ENCODE measurements at regions of chr2 and their contacts with region 1.

Region 1: GRCh38 chr2:26244309-26245121 is at the starts of genes HADHA and HADHB:
- DNase-seq: peak; percentile 88
- ATAC-seq: peak; percentile 84
- H3K4me3 Mint-ChIP-seq: peak within 1 kb of the TSS; percentile 97
- H3K27ac Mint-ChIP-seq: peak within 1 kb of the TSS; percentile 100
- H3K4me1 Mint-ChIP-seq: peaks cover 72% of the 10 kb centered on the region
- H3K27me3 Mint-ChIP-seq: no peaks in the 10 kb centered on the region
- CTCF ChIP-seq: no peak
- total RNA-seq, gene HADHA: 127 and 128 TPM in 2 replicates
- total RNA-seq, gene HADHB: 62.4 and 65.6 TPM in 2 replicates

Region 2: DNA sequence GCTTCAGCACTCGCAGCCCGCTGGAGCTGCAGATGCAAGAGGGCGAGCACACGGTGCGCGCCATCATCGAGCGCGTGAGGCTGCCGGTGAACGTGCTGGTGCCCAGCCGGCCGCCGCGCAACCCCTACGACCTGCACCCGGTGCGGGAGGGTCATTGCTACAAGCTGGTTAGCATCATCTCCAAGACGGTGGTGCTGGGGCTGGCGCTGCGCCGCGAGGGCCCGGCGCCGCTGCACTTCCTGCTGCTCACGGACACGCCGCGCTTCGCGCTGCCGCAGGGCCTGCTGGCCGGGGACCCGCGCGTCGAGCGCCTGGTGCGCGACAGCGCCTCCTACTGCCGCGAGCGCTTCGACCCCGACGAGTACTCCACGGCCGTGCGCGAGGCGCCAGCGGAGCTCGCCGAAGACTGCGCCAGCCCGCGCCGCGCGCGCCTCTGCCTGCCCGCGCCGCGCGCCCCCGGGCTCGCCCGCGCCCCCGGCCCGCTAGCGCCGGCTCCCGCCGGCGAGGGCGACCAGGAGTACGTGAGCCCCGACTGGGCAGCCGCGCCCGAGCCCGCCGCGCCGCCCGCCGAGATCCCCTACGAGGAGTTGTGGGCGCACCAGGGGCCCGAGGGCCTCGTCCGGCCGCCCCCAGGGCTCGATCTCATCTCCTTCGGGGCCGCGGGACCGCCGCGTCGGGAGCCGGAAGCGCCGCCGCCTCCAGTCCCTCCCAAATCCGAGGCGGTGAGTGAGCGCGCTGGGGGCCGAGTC is 59.8 kb before region 1 on chr2:
- CTCF ChIA-PET with region 1: interaction called, 4 read pairs
- POLR2A ChIA-PET with region 1: interaction called, 6 read pairs
- intact Hi-C with region 1: loop called (anchors 2 kb)
- DNase-seq: peak; percentile 80
- ATAC-seq: peak; percentile 98
- H3K4me3 Mint-ChIP-seq: peak overlapping the region; percentile 75
- H3K27ac Mint-ChIP-seq: no peak overlapping the region
- H3K4me1 Mint-ChIP-seq: peaks cover 10% of the 10 kb centered on the region
- H3K27me3 Mint-ChIP-seq: peaks cover 13% of the 10 kb centered on the region
- CTCF ChIP-seq: no peak

Region 3: DNA sequence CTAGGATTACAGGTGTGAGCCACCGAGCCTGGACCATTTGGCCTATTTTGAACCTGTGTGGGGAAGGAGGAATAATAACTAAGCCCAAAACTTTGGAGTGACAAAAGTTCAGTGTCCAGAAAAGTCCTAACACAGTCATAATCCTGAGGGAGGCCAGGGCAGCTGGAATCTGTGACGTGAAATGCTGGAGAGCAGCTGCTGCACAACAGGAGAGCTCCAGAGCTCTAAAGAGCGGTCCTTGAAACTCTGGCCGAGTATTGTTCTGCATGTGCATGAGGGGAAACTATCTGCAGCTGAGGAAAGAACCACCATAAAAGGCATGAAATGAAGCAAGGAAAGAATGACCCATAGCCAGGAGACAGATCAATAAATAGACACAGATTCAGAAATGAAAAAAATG is 27.9 kb before region 1 on chr2:
- CTCF ChIA-PET with region 1: no interaction called
- POLR2A ChIA-PET with region 1: no interaction called
- intact Hi-C with region 1: no loop called
- DNase-seq: no peak
- ATAC-seq: no peak
- H3K4me3 Mint-ChIP-seq: no peak overlapping the region
- H3K27ac Mint-ChIP-seq: no peak overlapping the region
- H3K4me1 Mint-ChIP-seq: no peaks in the 10 kb centered on the region
- H3K27me3 Mint-ChIP-seq: no peaks in the 10 kb centered on the region
- CTCF ChIP-seq: no peak

Region 4: GRCh38 chr2:26269571-26270158 is 25.1 kb after region 1 on chr2:
- CTCF ChIA-PET with region 1: no interaction called
- POLR2A ChIA-PET with region 1: interaction called, 18 read pairs
- intact Hi-C with region 1: loop called (anchors 1 kb)
- DNase-seq: no peak
- ATAC-seq: peak; percentile 57
- H3K4me3 Mint-ChIP-seq: no peak overlapping the region
- H3K27ac Mint-ChIP-seq: peak overlapping the region; percentile 55
- H3K4me1 Mint-ChIP-seq: peaks cover 20% of the 10 kb centered on the region
- H3K27me3 Mint-ChIP-seq: no peaks in the 10 kb centered on the region
- CTCF ChIP-seq: no peak

Region 5: DNA sequence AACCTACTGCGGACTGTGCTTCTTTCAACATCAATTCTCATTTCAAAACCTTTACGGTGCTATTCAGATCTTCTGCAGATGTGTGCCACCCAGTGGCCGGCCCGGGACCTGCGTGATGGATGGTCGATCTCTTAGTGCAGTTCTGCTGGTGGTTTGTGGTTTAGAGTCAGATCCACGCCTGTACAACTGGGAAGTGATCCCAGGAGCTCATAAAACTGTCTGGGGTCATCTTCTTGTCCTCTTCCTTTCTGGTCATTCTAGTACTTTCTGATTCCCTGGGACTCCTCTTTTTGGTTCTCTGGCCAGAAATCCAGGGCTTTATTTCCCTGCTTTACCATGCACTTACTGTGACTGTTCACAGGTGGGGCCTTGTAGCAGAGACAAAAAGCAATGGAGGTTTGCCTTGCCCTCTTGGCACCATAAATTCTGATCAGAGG is 85.6 kb after region 1 on chr2:
- CTCF ChIA-PET with region 1: interaction called, 3 read pairs
- POLR2A ChIA-PET with region 1: interaction called, 3 read pairs
- intact Hi-C with region 1: loop called (anchors 1 kb)
- DNase-seq: peak; percentile 66
- ATAC-seq: peak; percentile 99
- H3K4me3 Mint-ChIP-seq: no peak overlapping the region
- H3K27ac Mint-ChIP-seq: no peak overlapping the region
- H3K4me1 Mint-ChIP-seq: peaks cover 6% of the 10 kb centered on the region
- H3K27me3 Mint-ChIP-seq: no peaks in the 10 kb centered on the region
- CTCF ChIP-seq: peak; percentile 81

Region 6: GRCh38 chr2:27754138-27754588 is 1509.6 kb after region 1 on chr2:
- CTCF ChIA-PET with region 1: no interaction called
- POLR2A ChIA-PET with region 1: no interaction called
- intact Hi-C with region 1: no loop called
- DNase-seq: no peak
- ATAC-seq: peak; percentile 37
- H3K4me3 Mint-ChIP-seq: no peak overlapping the region
- H3K27ac Mint-ChIP-seq: no peak overlapping the region
- H3K4me1 Mint-ChIP-seq: no peaks in the 10 kb centered on the region
- H3K27me3 Mint-ChIP-seq: peaks cover 20% of the 10 kb centered on the region
- CTCF ChIP-seq: no peak

Measured in activated B cell treated with CpG ODN at 0.5 μM for 24 hours (primary cell).